MCF 10A (cell line): ENCODE measurements at regions of chr13 and their contacts with region 1.

Region 1: DNA sequence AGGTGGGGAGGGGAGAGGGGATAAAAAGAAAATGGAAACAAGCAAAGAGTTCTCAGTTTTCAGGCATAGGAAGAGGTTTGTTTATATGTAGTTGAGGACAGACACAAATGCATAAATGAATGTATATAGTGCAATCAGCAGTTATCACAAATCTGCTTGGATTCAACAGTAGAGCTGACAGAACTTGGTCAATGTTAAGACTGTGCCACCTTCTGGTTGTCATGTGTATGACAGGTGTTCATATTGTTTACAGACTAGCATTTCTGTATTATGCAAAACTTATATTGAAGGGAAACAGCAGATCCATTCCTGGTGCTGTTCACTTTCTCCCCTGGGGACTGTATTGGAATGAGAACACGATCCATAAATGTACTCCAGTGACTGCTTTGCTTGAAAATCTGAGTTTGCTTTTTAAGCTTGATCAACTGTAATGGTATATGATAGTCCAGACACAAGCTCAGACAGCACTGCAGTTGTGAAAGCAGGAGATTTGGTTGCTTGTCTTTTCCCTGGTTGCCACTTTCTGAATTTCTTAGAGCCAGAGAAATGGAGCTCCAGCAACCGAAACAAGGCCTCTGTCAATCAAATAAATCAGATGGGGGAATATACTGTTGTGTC is 319.5 kb upstream of the OBI1 start:
- DNase-seq: peak; percentile 73
- H3K4me3 Mint-ChIP-seq: no peak overlapping the region
- H3K27ac Mint-ChIP-seq: no peak overlapping the region
- H3K4me1 Mint-ChIP-seq: no peaks in the 10 kb centered on the region
- H3K27me3 Mint-ChIP-seq: peaks cover 89% of the 10 kb centered on the region
- CTCF ChIP-seq: peak; percentile 63

Region 2: DNA sequence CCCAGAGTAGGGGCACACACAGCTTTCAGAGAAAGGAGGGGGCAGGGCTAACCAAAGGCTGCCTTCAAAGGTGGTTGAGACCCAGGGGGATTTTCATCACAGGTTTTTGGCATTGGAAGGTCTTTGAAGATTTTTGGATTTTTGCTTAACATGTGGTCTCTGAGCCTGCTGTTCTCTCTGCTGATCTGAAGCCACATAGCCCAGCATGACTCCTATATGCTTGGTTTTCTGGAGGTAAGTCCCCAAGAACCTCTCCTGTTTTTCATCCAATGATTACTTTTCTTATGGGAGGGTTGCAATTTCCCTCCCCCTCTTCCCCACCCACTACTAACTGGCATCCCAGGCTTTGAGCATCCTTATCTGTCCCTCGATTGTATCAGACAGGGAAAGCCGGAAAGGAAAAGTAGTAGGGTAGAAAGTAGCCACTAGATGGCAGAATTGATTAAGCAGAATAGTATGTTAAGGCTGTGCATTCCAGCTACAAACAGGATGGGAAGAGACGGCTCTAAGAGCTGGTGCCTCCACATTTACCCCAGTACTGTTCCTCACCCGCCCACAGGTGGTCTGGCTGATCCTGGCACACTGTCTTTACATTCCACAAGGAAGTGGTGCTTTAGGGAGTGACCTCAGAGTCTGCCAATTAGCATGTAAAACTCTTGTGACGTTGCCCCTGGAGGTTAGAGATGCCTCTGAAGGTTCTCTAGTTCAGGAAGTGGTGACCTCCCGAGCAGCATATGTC is 840.9 kb before region 1 on chr13:
- CTCF ChIA-PET with region 1: interaction called, 47 read pairs
- POLR2A ChIA-PET with region 1: no interaction called
- intact Hi-C with region 1: loop called (anchors 1 kb)
- DNase-seq: peak; percentile 68
- H3K4me3 Mint-ChIP-seq: no peak overlapping the region
- H3K27ac Mint-ChIP-seq: no peak overlapping the region
- H3K4me1 Mint-ChIP-seq: no peaks in the 10 kb centered on the region
- H3K27me3 Mint-ChIP-seq: peaks cover under 1% of the 10 kb centered on the region
- CTCF ChIP-seq: peak; percentile 81

Region 3: GRCh38 chr13:78241278-78241919 is 737.1 kb before region 1 on chr13:
- CTCF ChIA-PET with region 1: interaction called, 15 read pairs
- POLR2A ChIA-PET with region 1: no interaction called
- intact Hi-C with region 1: no loop called
- DNase-seq: peak; percentile 53
- H3K4me3 Mint-ChIP-seq: no peak overlapping the region
- H3K27ac Mint-ChIP-seq: no peak overlapping the region
- H3K4me1 Mint-ChIP-seq: no peaks in the 10 kb centered on the region
- H3K27me3 Mint-ChIP-seq: no peaks in the 10 kb centered on the region
- CTCF ChIP-seq: peak; percentile 60

Region 4: GRCh38 chr13:78317030-78317429 is 661.5 kb before region 1 on chr13:
- CTCF ChIA-PET with region 1: interaction called, 14 read pairs
- POLR2A ChIA-PET with region 1: no interaction called
- intact Hi-C with region 1: loop called (anchors 1 kb)
- DNase-seq: peak; percentile 21
- H3K4me3 Mint-ChIP-seq: no peak overlapping the region
- H3K27ac Mint-ChIP-seq: no peak overlapping the region
- H3K4me1 Mint-ChIP-seq: no peaks in the 10 kb centered on the region
- H3K27me3 Mint-ChIP-seq: peaks cover 13% of the 10 kb centered on the region
- CTCF ChIP-seq: peak; percentile 37

Region 5: DNA sequence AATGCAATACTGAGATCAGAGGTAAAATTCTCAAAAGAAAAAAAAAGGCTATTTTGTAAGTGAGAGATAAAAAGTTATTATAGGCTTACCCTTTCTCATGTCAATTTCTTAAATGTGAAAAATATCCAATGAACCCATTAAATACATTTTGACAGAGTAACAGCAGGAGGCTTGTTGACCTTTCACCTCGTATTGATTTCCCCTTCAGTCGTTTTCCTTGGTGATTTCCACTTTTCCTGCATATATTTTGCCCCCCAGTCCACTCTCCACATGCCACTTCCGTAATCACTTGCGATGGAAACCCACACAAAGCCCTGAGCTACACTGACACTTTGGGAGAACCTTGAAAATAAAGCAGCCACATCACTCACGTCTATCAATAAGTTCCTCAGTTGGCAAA is 71.5 kb before region 1 on chr13:
- CTCF ChIA-PET with region 1: no interaction called
- POLR2A ChIA-PET with region 1: no interaction called
- intact Hi-C with region 1: no loop called
- DNase-seq: no peak
- H3K4me3 Mint-ChIP-seq: no peak overlapping the region
- H3K27ac Mint-ChIP-seq: no peak overlapping the region
- H3K4me1 Mint-ChIP-seq: no peaks in the 10 kb centered on the region
- H3K27me3 Mint-ChIP-seq: peaks cover 21% of the 10 kb centered on the region
- CTCF ChIP-seq: no peak

Region 6: DNA sequence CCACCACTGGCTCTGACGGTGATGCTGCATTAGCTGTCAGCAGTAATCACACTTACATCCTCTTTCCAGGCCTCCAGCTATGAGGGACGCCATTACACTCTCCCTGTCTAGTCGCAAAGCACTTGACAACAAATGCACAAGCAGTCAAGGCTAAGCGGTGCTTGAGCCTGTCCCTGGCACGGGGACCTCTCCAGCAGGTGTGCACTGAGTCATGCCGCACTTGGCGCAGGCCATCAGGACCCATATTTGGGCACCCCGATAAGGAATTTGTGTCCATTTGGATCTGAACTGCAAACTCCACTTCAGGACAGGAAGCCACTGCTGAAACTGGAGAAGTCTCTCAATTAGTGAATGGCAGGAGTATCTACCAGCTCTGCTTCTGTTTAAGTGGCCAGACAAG is 17.6 kb before region 1 on chr13:
- CTCF ChIA-PET with region 1: interaction called, 11 read pairs
- POLR2A ChIA-PET with region 1: interaction called, 3 read pairs
- intact Hi-C with region 1: no loop called
- DNase-seq: no peak
- H3K4me3 Mint-ChIP-seq: no peak overlapping the region
- H3K27ac Mint-ChIP-seq: no peak overlapping the region
- H3K4me1 Mint-ChIP-seq: peaks cover 5% of the 10 kb centered on the region
- H3K27me3 Mint-ChIP-seq: peaks cover 28% of the 10 kb centered on the region
- CTCF ChIP-seq: no peak

Region 7: DNA sequence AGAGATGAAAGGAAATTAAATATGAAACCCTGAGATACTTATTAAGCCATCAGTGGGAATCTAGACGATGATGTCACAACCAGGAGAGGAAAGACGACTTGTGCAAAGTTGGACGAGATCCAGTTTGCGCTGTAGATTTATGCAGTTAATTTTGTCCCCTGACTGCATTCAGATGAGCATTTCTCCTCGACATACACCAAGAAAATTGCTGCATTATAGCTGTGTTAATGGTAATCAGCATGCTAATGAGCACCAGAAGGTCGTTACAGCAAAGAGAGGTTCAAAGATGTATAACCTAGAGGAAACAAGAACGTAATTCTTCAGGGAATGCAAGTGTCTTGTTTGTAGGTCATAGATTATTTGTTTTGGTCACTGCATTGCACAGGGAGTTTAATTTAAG is 55.9 kb after region 1 on chr13:
- CTCF ChIA-PET with region 1: no interaction called
- POLR2A ChIA-PET with region 1: no interaction called
- intact Hi-C with region 1: no loop called
- DNase-seq: peak; percentile 10
- H3K4me3 Mint-ChIP-seq: no peak overlapping the region
- H3K27ac Mint-ChIP-seq: no peak overlapping the region
- H3K4me1 Mint-ChIP-seq: peaks cover 4% of the 10 kb centered on the region
- H3K27me3 Mint-ChIP-seq: no peaks in the 10 kb centered on the region
- CTCF ChIP-seq: no peak

Region 8: DNA sequence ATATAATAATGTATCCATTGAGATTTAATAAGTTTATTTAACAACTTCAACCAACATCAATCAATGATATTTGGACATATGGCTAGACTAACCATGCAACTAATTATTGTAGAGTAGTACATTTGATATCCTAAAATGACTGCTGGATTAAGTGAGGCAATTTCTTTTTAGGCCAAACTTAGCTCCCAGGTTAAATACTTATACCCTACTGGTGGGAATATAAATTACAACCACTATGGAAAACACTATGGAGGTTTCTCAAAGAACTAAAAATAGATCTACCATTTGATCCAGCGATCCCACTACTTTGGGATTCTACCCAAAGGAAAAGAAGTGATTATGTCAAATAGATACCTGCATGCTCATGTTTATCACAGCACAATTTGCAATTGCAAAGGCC is 81.7 kb after region 1 on chr13:
- CTCF ChIA-PET with region 1: no interaction called
- POLR2A ChIA-PET with region 1: no interaction called
- intact Hi-C with region 1: no loop called
- DNase-seq: no peak
- H3K4me3 Mint-ChIP-seq: no peak overlapping the region
- H3K27ac Mint-ChIP-seq: no peak overlapping the region
- H3K4me1 Mint-ChIP-seq: no peaks in the 10 kb centered on the region
- H3K27me3 Mint-ChIP-seq: no peaks in the 10 kb centered on the region
- CTCF ChIP-seq: no peak

Region 9: GRCh38 chr13:79246578-79246949 is 268.1 kb after region 1 on chr13:
- CTCF ChIA-PET with region 1: interaction called, 4 read pairs
- POLR2A ChIA-PET with region 1: no interaction called
- intact Hi-C with region 1: loop called (anchors 5 kb)
- DNase-seq: peak; percentile 13
- H3K4me3 Mint-ChIP-seq: no peak overlapping the region
- H3K27ac Mint-ChIP-seq: no peak overlapping the region
- H3K4me1 Mint-ChIP-seq: no peaks in the 10 kb centered on the region
- H3K27me3 Mint-ChIP-seq: peaks cover 14% of the 10 kb centered on the region
- CTCF ChIP-seq: peak; percentile 26